ENCODE measurements at regions of chr4 and their contacts with region 1.

Region 1: DNA sequence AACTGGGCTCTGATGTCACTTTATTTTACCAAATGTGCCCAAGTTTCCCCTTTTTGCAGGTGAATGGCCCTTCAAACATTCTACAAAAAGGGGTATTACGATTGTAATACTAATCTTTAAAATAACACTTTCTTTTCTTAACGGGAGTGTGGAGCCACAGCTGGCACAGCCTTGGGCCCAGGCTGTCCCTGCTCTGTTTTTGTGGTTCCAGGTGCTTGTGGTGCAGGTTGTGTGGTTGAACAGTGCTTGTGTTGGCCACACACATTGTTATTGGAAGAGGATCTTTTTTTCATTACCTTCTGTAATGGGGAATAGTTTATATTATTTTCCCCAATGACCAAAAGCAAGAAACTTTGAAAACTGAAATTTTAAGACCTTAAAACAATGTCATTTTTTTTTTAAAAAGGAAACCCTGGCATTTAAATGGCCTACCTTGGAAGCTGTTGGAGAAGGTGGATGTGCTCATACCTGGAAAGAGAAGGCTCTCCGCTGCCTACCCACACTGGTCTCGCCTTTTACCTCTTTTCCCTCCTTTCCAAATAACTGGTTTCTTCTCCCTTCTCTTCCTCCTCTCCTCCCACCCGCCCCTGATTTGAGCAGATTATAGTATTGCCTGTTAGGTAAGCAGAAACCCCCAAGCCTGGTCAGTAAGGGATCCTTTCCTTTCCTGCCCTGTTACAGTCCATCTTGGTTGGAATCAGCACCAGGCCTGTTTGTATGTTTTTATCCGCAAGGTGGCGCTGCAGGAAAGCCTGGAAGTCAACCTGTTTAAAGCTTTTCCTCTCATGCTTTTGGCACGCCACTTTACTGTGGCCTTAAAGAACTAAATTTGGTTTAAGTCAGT is 28.6 kb downstream of the HADH start:
- DNase-seq: peak; percentile 88
- H3K4me3 Mint-ChIP-seq: no peak overlapping the region
- H3K27ac Mint-ChIP-seq: no peak overlapping the region
- H3K4me1 Mint-ChIP-seq: peaks cover 8% of the 10 kb centered on the region
- H3K27me3 Mint-ChIP-seq: no peaks in the 10 kb centered on the region

Region 2: GRCh38 chr4:107863850-107864371 is 154.4 kb before region 1 on chr4:
- CTCF ChIA-PET with region 1: no interaction called
- POLR2A ChIA-PET with region 1: no interaction called
- intact Hi-C with region 1: no loop called
- DNase-seq: peak; percentile 60
- H3K4me3 Mint-ChIP-seq: no peak overlapping the region
- H3K27ac Mint-ChIP-seq: peak overlapping the region; percentile 28
- H3K4me1 Mint-ChIP-seq: peaks cover 21% of the 10 kb centered on the region
- H3K27me3 Mint-ChIP-seq: peaks cover 9% of the 10 kb centered on the region

Region 3: GRCh38 chr4:107989537-107990386 is 28.5 kb before region 1 on chr4 and contains the start of gene HADH:
- CTCF ChIA-PET with region 1: interaction called, 16 read pairs
- POLR2A ChIA-PET with region 1: no interaction called
- intact Hi-C with region 1: no loop called
- DNase-seq: peak; percentile 95
- H3K4me3 Mint-ChIP-seq: peak within 1 kb of the TSS; percentile 85
- H3K27ac Mint-ChIP-seq: peak within 1 kb of the TSS; percentile 76
- H3K4me1 Mint-ChIP-seq: peaks cover 36% of the 10 kb centered on the region
- H3K27me3 Mint-ChIP-seq: no peaks in the 10 kb centered on the region
- total RNA-seq, gene HADH: 49.0 to 50.6 TPM

Region 4: DNA sequence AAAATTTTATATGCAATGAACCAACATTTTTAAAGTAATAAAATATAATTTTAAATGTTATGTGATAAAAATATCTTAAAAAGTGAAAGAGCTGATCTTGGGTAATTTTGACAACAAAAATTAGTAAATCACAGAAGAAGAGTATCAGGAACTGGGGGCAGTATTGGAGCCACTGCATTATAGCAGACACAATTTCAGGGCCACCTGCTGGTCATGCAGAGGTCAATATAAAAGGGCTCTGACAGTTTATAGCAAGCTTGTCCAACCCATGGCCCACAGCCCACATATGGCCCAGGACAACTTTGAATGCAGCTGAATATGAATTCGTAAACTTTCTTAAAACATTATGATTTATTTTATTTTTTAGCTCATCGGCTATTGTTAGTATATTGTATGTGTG is 163.4 kb after region 1 on chr4:
- CTCF ChIA-PET with region 1: interaction called, 16 read pairs
- POLR2A ChIA-PET with region 1: no interaction called
- intact Hi-C with region 1: no loop called
- DNase-seq: no peak
- H3K4me3 Mint-ChIP-seq: no peak overlapping the region
- H3K27ac Mint-ChIP-seq: no peak overlapping the region
- H3K4me1 Mint-ChIP-seq: no peaks in the 10 kb centered on the region
- H3K27me3 Mint-ChIP-seq: no peaks in the 10 kb centered on the region

Region 5: DNA sequence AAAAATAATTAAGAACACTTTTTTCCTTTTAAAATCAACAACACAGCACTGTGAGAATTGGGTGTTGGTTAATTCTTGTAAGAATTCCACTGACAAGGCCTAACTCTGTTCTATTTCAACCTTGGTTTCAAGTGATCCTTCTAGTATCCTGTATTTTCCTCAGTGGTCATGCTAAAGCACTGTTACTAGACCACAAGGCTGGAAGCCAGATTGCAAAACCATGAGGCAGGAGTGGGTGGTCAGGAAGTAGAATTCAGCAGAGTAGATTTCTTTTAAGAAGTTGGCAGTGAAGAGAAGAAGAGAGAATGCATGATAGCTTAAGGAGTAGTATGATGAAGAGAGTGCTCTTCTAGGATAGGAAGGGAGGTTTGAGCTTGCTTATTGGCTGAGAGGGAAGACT is 222.1 kb after region 1 on chr4:
- CTCF ChIA-PET with region 1: no interaction called
- POLR2A ChIA-PET with region 1: no interaction called
- intact Hi-C with region 1: no loop called
- DNase-seq: no peak
- H3K4me3 Mint-ChIP-seq: no peak overlapping the region
- H3K27ac Mint-ChIP-seq: no peak overlapping the region
- H3K4me1 Mint-ChIP-seq: peaks cover 7% of the 10 kb centered on the region
- H3K27me3 Mint-ChIP-seq: no peaks in the 10 kb centered on the region

Region 6: GRCh38 chr4:108492816-108493595 is 474.7 kb after region 1 on chr4:
- CTCF ChIA-PET with region 1: interaction called, 33 read pairs
- POLR2A ChIA-PET with region 1: no interaction called
- intact Hi-C with region 1: loop called (anchors 1 kb)
- DNase-seq: peak; percentile 53
- H3K4me3 Mint-ChIP-seq: no peak overlapping the region
- H3K27ac Mint-ChIP-seq: no peak overlapping the region
- H3K4me1 Mint-ChIP-seq: no peaks in the 10 kb centered on the region
- H3K27me3 Mint-ChIP-seq: no peaks in the 10 kb centered on the region

Region 7: DNA sequence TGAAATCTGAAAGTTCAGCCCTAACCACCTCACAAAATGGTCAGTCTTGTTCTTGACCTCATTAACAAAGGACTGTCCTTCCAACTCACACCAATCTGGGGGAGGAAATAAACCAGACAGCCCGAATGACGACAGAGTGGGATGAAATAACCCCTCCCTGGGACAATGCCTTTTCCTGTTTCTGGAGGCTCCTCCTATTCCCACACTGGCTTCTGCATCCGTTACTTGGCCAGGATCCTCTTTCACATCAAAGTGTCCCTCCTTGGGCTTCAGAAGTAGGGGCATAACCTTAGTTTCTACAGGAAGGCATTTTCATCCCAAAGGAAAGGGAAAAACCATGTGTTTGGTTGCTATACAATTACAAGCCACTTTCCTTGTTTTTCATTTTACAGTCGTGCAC is 542.4 kb after region 1 on chr4:
- CTCF ChIA-PET with region 1: interaction called, 15 read pairs
- POLR2A ChIA-PET with region 1: no interaction called
- intact Hi-C with region 1: no loop called
- DNase-seq: no peak
- H3K4me3 Mint-ChIP-seq: no peak overlapping the region
- H3K27ac Mint-ChIP-seq: no peak overlapping the region
- H3K4me1 Mint-ChIP-seq: no peaks in the 10 kb centered on the region
- H3K27me3 Mint-ChIP-seq: no peaks in the 10 kb centered on the region

Measured in activated CD4-positive, alpha-beta memory T cell treated with anti-CD3 and anti-CD28 coated beads for 36 hours (primary cell).